HEK293T (cell line): ENCODE measurements at regions of chr17 and their contacts with region 1.

Region 1: DNA sequence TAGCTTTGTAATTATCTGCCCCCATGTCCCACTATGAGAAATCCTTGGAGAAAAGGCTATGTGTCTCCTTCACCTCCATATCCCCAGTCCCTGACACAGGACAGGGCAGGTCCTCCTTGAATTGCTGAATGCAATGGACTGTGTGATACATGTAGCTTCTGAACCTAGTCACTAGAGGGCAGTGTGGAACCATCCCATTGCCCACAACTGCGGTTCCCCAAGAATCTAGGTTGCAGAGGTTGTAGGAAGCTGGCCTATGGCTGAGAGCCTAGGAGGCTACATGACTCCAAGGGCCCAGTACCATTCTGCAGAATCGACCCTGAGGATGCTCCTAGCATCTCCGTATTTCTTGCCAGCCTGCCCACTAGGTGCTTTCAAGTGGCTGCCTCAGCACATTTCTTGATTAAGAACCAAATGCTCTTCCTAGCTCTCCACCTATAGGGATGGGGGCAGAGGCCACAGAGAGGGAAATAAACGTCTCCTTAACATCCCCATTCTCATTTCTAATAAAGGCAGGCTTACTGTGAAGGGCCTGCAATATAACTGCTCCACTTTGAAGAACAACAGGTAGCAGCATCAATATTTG is 394.0 kb downstream of the CA10 start:
- DNase-seq: peak; percentile 73

Region 2: GRCh38 chr17:51703361-51704341 is 60.8 kb before region 1 on chr17:
- CTCF ChIA-PET with region 1: no interaction called
- POLR2A ChIA-PET with region 1: no interaction called
- DNase-seq: no peak

Region 3: GRCh38 chr17:52106638-52107261 is 342.3 kb after region 1 on chr17:
- CTCF ChIA-PET with region 1: interaction called, 18 read pairs
- POLR2A ChIA-PET with region 1: no interaction called
- DNase-seq: peak; percentile 48